OCI-LY7 (cell line): ENCODE measurements at regions of chr22 and their contacts with region 1.

Region 1: GRCh38 chr22:50525390-50526068 is at the start of gene SCO2:
- DNase-seq: peak; percentile 99
- H3K4me3 ChIP-seq: peak within 1 kb of the TSS; percentile 77
- H3K27ac ChIP-seq: peak within 1 kb of the TSS; percentile 92
- H3K4me1 ChIP-seq: peaks cover 24% of the 10 kb centered on the region
- CTCF ChIP-seq: peak; percentile 56
- total RNA-seq, gene SCO2: 2.7 and 4.9 TPM in 2 replicates

Region 2: DNA sequence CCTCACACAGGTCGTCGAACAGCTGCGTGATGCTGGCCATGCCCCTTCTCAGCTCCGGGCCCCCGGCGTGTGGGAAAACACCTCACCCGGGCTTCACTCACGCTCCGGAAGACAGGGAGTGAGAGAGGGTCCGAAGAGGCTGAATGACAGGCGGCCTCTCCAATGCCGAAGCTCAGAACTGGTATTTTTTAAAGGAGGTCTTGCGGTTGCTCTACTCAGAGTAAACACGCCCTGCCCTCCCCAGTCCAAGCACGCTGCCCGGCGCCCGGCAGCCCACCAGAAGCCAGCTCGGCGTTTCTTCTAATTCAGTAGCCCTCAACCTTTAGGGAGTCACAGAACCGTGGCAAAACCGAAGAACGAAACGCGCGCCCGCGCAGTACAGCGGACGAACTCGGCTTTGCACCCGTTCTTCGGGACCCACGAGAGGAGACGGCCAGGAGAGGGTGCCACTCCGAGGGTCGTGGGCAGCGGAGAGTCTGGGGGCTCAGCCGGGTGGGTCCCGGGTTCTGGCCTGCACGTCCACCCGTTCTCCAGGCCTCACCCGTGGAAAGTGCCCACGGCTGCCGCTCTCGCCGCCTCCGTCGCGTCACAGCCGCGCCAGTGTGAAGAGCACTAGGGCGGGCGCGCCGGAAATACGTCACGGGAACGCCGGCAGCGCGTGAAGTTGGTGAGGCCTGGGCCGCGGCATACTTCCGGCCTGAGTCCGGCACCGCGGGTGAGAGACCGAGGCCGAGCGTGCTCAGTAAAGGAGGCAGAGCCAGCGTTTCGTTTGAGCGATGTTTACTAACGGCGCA is 280.9 kb before region 1 on chr22 and contains the start of gene TUBGCP6:
- CTCF ChIA-PET with region 1: no interaction called
- POLR2A ChIA-PET with region 1: interaction called, 3 read pairs
- intact Hi-C with region 1: loop called (anchors 5 kb)
- DNase-seq: peak; percentile 94
- H3K4me3 ChIP-seq: peak within 1 kb of the TSS; percentile 81
- H3K27ac ChIP-seq: peak within 1 kb of the TSS; percentile 62
- H3K4me1 ChIP-seq: peaks cover 42% of the 10 kb centered on the region
- CTCF ChIP-seq: 0 out of 2 replicates have a peak, but pooled peaks have one; percentile 37
- total RNA-seq, gene TUBGCP6: 52.8 and 57.7 TPM in 2 replicates

Region 3: DNA sequence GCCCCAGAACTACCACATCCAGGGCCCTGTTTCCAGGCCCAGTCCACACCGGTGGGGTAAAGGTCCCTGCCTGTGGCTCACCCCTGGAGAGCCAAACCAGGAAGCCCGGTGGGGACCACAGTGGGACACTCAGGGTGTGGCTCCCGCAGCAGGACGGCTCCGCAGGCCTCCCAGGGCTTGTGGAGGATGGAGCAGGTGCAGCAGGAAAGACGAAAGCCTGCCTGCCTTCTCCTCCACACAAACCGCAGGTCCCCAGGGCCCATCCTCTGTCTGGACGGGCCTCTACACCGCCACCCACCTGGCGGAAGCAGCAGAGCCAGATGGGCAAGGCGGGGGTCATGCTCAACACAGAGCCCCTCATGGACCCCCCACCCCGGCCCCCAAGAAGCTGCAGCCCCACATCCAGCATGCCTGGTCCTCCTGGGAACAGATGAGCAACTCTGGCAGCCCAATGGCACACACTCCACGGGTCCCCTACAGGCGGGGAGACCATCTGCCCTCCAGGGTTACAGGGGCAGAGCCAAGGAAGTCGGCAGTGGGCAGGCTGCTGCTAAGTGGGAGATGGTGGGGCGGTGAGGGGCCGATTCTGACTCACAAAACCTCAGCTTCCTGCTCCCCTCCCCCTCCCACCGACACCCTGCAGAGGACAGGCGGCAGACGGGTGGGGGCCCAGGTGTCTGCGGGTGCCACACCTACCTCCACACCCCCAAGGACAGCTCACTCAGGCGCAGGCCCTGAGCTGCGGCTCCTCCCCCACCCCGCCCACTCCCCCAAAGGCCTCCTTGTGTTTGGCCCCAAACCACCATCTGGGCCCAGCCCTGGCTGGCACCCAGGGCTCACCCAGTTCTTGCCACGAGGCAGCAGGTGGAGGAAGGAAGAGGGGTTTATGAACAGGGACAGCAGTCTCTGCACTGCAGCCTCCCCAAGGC is 55.9 kb before region 1 on chr22:
- CTCF ChIA-PET with region 1: interaction called, 6 read pairs
- POLR2A ChIA-PET with region 1: interaction called, 3 read pairs
- intact Hi-C with region 1: loop called (anchors 2 kb)
- DNase-seq: peak; percentile 98
- H3K4me3 ChIP-seq: peak overlapping the region; percentile 96
- H3K27ac ChIP-seq: peak overlapping the region; percentile 95
- H3K4me1 ChIP-seq: peaks cover 68% of the 10 kb centered on the region
- CTCF ChIP-seq: 0 out of 2 replicates have a peak, but pooled peaks have one; percentile 21

Region 4: DNA sequence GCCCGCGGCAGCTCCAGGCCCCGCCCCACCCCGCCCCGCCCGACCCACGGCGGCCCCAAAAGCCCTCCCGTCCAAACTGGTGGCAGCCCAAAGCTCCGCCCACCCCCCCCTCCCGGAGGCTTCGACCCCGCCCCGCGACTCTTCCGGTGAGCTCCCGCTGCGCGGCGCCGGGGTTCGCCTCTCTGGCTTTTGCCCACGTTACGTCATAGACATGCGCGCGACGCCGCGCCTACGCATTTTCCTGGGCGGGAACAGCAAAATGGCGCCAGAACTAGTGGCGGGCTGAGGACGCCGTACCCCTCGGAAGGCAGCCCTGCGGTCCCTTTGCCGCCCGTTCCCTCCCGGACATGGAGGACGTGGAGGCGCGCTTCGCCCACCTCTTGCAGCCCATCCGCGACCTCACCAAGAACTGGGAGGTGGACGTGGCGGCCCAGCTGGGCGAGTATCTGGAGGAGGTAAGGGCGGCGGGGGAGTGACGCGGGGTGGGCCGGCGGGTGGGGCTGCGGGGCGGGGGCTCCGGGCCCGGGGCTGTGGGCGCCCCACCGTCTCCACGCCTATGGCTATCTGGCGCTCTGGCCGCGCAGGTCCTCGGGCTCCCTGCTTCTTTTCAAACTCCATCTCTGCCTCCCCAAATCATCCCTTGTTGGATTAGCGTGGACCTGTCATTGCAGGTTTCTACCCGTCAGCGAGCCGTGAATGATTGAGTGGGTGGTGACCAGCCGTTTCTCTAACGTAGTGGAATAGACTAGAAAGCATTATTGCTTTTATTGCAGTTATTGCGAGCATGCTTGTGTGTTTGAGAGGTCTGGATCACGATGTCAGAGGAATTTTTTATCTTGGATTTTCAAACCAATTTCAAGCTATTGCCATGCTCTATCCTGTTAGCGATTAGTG is 17.3 kb before region 1 on chr22 and contains the start of gene NCAPH2:
- CTCF ChIA-PET with region 1: interaction called, 9 read pairs
- POLR2A ChIA-PET with region 1: interaction called, 33 read pairs
- intact Hi-C with region 1: loop called (anchors 1 kb)
- DNase-seq: peak; percentile 99
- H3K4me3 ChIP-seq: peak within 1 kb of the TSS; percentile 100
- H3K27ac ChIP-seq: peak within 1 kb of the TSS; percentile 59
- H3K4me1 ChIP-seq: peaks cover 27% of the 10 kb centered on the region
- CTCF ChIP-seq: no peak
- total RNA-seq, gene NCAPH2: 129 and 151 TPM in 2 replicates

Region 5: DNA sequence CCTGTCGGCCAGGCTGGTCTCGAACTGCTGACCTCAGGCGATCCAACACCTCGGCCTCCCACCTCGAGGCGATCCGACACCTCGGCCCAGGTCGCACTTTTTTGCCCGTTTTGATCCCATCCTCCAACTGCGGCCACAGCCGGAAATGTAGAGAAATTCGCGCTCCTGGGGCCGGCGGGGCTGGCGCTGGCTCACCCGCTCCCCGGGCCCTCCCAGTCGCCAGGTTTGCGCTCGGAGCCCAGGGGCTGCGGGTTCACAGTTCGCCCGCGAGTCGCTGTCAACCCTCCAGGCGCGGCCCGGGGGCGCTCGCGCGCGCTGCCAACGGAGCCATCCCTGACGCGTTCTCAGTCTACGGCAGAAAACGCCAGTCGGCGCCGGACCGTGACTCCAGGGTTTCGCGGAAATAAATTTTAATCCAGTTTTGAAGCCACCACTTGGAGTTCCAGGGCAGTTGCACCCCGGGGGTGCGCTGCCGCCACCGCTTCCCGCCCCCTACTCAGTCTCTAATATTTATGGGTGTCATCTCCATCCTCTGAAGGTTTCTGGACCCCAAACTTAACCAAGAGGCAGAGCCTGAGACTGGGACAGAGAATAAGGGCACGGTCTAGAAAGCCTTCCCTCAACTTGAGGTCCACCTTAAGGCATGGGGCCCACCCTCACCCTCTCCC is 18.7 kb after region 1 on chr22:
- CTCF ChIA-PET with region 1: interaction called, 5 read pairs
- POLR2A ChIA-PET with region 1: interaction called, 12 read pairs
- intact Hi-C with region 1: no loop called
- DNase-seq: peak; percentile 66
- H3K4me3 ChIP-seq: no peak overlapping the region
- H3K27ac ChIP-seq: no peak overlapping the region
- H3K4me1 ChIP-seq: peaks cover 57% of the 10 kb centered on the region
- CTCF ChIP-seq: peak; percentile 80

Region 6: GRCh38 chr22:50562523-50563412 is 37.2 kb after region 1 on chr22 and contains the start of gene SYCE3:
- CTCF ChIA-PET with region 1: interaction called, 9 read pairs
- POLR2A ChIA-PET with region 1: interaction called, 4 read pairs
- intact Hi-C with region 1: loop called (anchors 2 kb)
- DNase-seq: peak; percentile 98
- H3K4me3 ChIP-seq: peak within 1 kb of the TSS; percentile 66
- H3K27ac ChIP-seq: no peak within 1 kb of the TSS
- H3K4me1 ChIP-seq: peaks cover 5% of the 10 kb centered on the region
- CTCF ChIP-seq: peak; percentile 81
- total RNA-seq, gene SYCE3: not detected in 2 replicates

Region 7: GRCh38 chr22:50595189-50595588 is 69.7 kb after region 1 on chr22:
- CTCF ChIA-PET with region 1: no interaction called
- POLR2A ChIA-PET with region 1: no interaction called
- intact Hi-C with region 1: no loop called
- DNase-seq: no peak
- H3K4me3 ChIP-seq: no peak overlapping the region
- H3K27ac ChIP-seq: no peak overlapping the region
- H3K4me1 ChIP-seq: no peaks in the 10 kb centered on the region
- CTCF ChIP-seq: no peak

Region 8: DNA sequence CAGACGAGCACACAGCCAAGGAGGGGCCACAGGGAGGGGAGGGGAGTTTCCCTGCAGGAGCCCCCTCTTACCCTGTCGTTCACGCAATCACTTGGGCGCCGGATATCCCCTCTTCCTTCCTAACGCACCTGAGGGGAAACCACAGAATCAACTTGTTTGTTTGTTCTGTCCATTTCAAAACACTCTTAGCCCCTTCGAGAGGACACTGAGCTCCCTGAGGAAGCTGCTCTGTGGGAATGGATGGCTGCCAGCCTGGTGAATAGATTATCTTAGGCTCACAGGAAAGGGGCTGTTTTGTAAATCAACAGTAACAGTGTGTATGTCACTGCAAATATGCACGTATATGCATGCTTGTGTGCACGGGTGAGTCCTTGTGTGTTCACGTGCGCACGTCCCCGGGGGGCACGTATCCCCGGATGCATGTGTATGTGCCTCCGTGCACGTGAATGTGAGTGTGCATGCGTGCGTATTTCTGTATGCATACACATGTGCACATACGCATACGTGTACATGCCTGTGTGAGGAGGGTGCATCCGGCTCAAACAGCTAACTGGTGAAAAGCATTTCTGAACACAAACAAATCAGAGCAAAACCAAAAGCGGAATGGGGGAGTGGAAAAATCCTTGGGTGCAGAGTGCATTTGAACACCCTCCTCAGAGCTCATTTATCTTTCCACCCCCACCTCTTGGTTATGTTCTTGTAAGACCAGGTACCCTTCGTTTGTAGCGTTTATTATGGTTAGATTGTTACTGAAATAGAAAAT is 95.2 kb after region 1 on chr22:
- CTCF ChIA-PET with region 1: interaction called, 8 read pairs
- POLR2A ChIA-PET with region 1: no interaction called
- intact Hi-C with region 1: loop called (anchors 2 kb)
- DNase-seq: peak; percentile 92
- H3K4me3 ChIP-seq: peak overlapping the region; percentile 67
- H3K27ac ChIP-seq: peak overlapping the region; percentile 82
- H3K4me1 ChIP-seq: peaks cover 37% of the 10 kb centered on the region
- CTCF ChIP-seq: no peak; the same call in 1 of the 2 replicates